ENCODE measurements at regions of chr22 and their contacts with region 1.

Region 1: GRCh38 chr22:49948958-49949913 is 11.3 kb upstream of the PIM3 start:
- DNase-seq: no peak
- ATAC-seq: peak; percentile 53
- H3K4me3 ChIP-seq: no peak overlapping the region
- H3K27ac ChIP-seq: peak overlapping the region; percentile 63
- H3K4me1 ChIP-seq: peaks cover 65% of the 10 kb centered on the region
- H3K27me3 ChIP-seq: no peaks in the 10 kb centered on the region
- CTCF ChIP-seq: no peak

Region 2: DNA sequence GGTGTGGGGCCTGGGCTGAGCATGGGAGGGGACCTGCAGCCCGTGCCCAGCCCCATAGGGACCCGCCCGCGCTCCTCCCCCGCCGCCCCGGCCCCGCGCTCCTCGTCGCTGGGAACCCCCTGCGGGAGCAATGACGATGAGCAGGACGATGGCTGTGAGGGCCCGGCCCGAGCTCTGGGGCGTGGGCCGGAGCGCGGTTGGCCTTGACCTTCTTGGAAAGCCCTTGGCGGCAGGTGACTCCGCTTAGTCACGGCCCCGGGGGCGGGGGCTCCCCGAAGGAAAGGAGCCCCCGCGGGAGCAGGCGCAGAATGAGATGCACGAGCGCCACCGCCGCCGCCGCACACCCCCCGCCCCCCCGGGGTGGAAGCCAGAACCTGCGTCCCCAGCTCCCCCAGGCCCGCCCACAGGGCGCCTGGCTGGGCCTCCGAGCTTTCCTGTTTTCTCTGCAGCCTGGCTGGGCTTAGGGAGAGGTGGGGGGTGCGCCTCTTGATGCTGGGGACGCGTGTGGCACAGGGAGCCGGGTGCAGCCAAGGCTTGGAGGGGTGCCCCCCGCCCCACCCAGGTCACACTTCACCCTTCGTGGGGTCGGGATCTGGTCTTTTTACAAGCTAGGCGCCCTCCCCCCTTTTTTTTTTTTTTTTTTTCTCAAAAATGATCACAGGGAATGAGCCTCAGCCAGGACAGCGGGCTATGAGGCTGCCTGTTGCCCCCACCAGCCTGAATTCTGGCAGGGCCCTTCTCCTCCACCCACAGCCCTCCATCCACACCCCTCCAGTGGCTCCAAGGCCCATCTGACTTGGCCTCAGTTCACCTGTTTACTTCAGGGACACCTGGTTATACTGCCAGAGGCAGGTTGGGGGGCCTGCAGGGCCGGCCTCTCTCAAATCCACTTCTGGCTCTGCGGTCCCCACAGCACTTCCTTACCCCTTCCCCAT is 13.0 kb before region 1 on chr22:
- CTCF ChIA-PET with region 1: interaction called, 10 read pairs
- POLR2A ChIA-PET with region 1: interaction called, 3 read pairs
- in situ Hi-C with region 1: no loop called
- intact Hi-C with region 1: no loop called
- DNase-seq: no peak
- ATAC-seq: peak; percentile 79
- H3K4me3 ChIP-seq: peak overlapping the region; percentile 27 to 30
- H3K27ac ChIP-seq: peak overlapping the region; percentile 68
- H3K4me1 ChIP-seq: peaks cover 41% of the 10 kb centered on the region
- H3K27me3 ChIP-seq: no peaks in the 10 kb centered on the region
- CTCF ChIP-seq: no peak

Region 3: GRCh38 chr22:50012716-50013181 is 63.5 kb after region 1 on chr22 and contains the start of gene IL17REL:
- CTCF ChIA-PET with region 1: no interaction called
- POLR2A ChIA-PET with region 1: no interaction called
- in situ Hi-C with region 1: no loop called
- intact Hi-C with region 1: no loop called
- DNase-seq: no peak
- ATAC-seq: peak; percentile 48
- H3K4me3 ChIP-seq: peak within 1 kb of the TSS in 1 of 2 experiments; percentile 20; a peak in 2 of 4 replicates
- H3K27ac ChIP-seq: 0 out of 2 replicates have a peak within 1 kb of the TSS, but pooled peaks have one; percentile 29
- H3K4me1 ChIP-seq: peaks cover 32% of the 10 kb centered on the region
- H3K27me3 ChIP-seq: no peaks in the 10 kb centered on the region
- CTCF ChIP-seq: no peak; the same call in 1 of the 2 replicates
- total RNA-seq, gene IL17REL: 0.82 TPM

Region 4: GRCh38 chr22:50058906-50059880 is 110.0 kb after region 1 on chr22:
- CTCF ChIA-PET with region 1: no interaction called
- POLR2A ChIA-PET with region 1: no interaction called
- in situ Hi-C with region 1: no loop called
- intact Hi-C with region 1: no loop called
- DNase-seq: no peak
- ATAC-seq: peak; percentile 52; the same call in 1 of the 2 replicates
- H3K4me3 ChIP-seq: no peak overlapping the region
- H3K27ac ChIP-seq: no peak overlapping the region
- H3K4me1 ChIP-seq: no peaks in the 10 kb centered on the region
- H3K27me3 ChIP-seq: no peaks in the 10 kb centered on the region
- CTCF ChIP-seq: no peak

Measured in Panc1 (cell line).